ENCODE measurements at regions of chr16 and their contacts with region 1.

Region 1: DNA sequence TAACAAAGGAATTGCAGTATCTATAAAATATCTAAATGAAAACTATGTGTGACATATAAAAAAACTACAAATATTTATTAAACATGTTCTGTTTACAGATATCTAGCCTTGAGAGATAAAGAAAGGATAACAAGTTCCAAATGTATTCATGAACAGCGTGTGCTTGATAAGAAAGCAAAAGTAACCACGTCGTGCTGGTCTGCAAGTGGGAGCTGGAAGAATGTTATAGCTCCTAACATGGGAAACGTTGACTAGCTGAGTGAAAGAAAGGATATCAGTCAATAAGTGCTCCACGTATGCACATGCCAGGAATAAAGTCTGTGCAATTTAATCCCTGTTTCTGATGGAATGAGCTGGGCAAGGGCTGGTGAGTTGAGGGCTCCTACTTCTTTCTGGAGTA is 71.2 kb upstream of the CDYL2 start:
- DNase-seq: no peak
- H3K4me3 ChIP-seq: no peak overlapping the region
- H3K27ac ChIP-seq: no peak overlapping the region
- H3K4me1 ChIP-seq: no peaks in the 10 kb centered on the region
- H3K27me3 ChIP-seq: no peaks in the 10 kb centered on the region
- CTCF ChIP-seq: no peak

Region 2: GRCh38 chr16:80837421-80838231 is 38.0 kb before region 1 on chr16:
- CTCF ChIA-PET with region 1: no interaction called
- dilution Hi-C with region 1: no loop called
- in situ Hi-C with region 1: no loop called
- intact Hi-C with region 1: no loop called
- DNase-seq: no peak
- H3K4me3 ChIP-seq: no peak overlapping the region
- H3K27ac ChIP-seq: no peak overlapping the region
- H3K4me1 ChIP-seq: no peaks in the 10 kb centered on the region
- H3K27me3 ChIP-seq: no peaks in the 10 kb centered on the region
- CTCF ChIP-seq: no peak

Region 3: GRCh38 chr16:80931801-80932712 is 56.4 kb after region 1 on chr16:
- CTCF ChIA-PET with region 1: no interaction called
- dilution Hi-C with region 1: loop called (anchors 5 kb)
- in situ Hi-C with region 1: no loop called
- intact Hi-C with region 1: no loop called
- DNase-seq: peak; percentile 12
- H3K4me3 ChIP-seq: peak overlapping the region in 2 of 3 experiments; percentile 23 to 32
- H3K27ac ChIP-seq: no peak overlapping the region
- H3K4me1 ChIP-seq: peaks cover 10% of the 10 kb centered on the region
- H3K27me3 ChIP-seq: no peaks in the 10 kb centered on the region
- CTCF ChIP-seq: no peak

Region 4: DNA sequence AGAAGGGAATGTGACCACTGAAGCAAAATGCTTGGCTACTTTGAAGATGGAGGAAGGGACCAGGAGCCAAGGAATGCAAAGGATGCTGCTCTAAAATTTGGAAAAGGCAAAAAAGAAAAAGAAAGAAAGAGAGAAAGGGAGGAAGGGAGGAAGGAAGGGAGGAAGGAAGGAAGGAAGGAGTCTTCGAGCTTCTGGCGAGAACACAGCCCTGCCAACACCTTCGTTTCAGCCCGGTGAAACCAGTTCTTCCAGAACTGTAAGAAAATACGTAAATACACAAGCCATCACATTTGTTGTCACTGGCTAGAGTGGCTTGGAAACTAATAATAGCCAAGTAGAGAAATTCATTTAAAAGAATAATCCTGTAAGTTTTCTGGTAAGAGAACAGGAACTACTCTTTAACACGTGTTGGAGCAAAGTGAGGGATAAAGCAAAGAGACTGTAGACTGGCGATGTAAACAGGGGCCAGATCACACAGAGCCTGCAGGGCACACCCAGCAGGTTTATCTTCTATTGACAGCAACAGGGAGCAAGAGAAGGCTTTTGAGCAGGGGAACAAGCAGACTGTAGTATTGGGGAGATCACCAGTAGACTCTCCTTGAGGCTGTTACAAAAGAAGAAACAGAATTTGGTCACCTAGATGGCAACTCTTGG is 1483.1 kb after region 1 on chr16:
- CTCF ChIA-PET with region 1: no interaction called
- dilution Hi-C with region 1: no loop called
- in situ Hi-C with region 1: no loop called
- intact Hi-C with region 1: no loop called
- DNase-seq: no peak
- H3K4me3 ChIP-seq: no peak overlapping the region
- H3K27ac ChIP-seq: no peak overlapping the region
- H3K4me1 ChIP-seq: no peaks in the 10 kb centered on the region
- H3K27me3 ChIP-seq: peaks cover 14% of the 10 kb centered on the region
- CTCF ChIP-seq: no peak

Measured in mammary epithelial cell (primary cell).